GM12878 (cell line): ENCODE measurements at regions of chr18 and their contacts with region 1.

Region 1: GRCh38 chr18:51897884-51898283 is 442.1 kb upstream of the DCC start:
- DNase-seq: no peak
- ATAC-seq: no peak
- H3K4me3 ChIP-seq: no peak overlapping the region
- H3K27ac ChIP-seq: no peak overlapping the region
- H3K4me1 ChIP-seq: no peaks in the 10 kb centered on the region
- H3K27me3 ChIP-seq: no peaks in the 10 kb centered on the region
- CTCF ChIP-seq: no peak
- EP300 ChIP-seq: no peak
- POLR2A ChIP-seq: no peak
- RAD21 ChIP-seq: no peak

Region 2: GRCh38 chr18:51907687-51908597 is 10.1 kb after region 1 on chr18:
- CTCF ChIA-PET with region 1: interaction called, 11 read pairs
- POLR2A ChIA-PET with region 1: no interaction called
- RAD21 ChIA-PET with region 1: interaction called, 6 read pairs
- SMC1A ChIA-PET with region 1: interaction called, 9 read pairs
- in situ Hi-C with region 1: no loop called
- intact Hi-C with region 1: no loop called
- DNase-seq: no peak
- ATAC-seq: no peak
- H3K4me3 ChIP-seq: no peak overlapping the region
- H3K27ac ChIP-seq: no peak overlapping the region
- H3K4me1 ChIP-seq: no peaks in the 10 kb centered on the region
- H3K27me3 ChIP-seq: no peaks in the 10 kb centered on the region
- CTCF ChIP-seq: no peak
- EP300 ChIP-seq: no peak
- POLR2A ChIP-seq: no peak
- RAD21 ChIP-seq: no peak